B cell (primary cell): ENCODE measurements at regions of chr1 and their contacts with region 1.

Region 1: DNA sequence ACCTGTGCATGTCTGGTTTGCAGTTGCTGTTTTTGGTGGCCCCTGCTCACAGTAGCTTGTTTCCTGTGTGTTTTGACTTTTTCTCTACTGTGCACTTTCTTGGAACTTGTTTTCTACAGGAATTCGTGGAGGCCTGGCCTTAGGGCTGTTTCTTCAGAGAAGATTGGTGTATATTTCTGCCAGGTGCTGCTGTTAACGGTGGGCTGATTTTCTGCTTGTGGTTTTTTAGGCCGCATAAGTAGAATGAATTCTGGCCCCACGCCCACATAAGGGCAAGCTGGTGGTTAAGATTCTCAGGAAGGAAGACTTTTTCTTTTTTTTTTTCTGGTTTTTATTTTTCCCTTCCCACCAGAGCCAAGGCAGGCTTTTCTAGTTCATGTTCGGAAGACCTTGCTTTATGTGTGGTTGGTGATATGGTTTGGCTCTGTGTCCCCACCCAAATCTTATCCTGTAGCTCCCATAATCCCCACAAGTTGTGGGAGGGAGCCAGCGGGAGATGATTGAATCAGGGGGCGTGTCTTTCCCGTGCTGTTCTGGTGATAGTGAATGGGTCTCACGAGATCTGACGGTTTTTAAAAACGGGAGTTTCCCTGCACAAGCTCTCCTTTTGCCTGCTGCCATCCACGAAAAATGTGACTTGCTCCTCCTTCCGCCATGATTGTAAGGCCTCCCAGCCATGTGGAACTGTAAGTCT is 71.5 kb upstream of the DISP3 start:
- DNase-seq: no peak
- ATAC-seq: peak; percentile 39
- H3K4me3 ChIP-seq: no peak overlapping the region
- H3K4me3 Mint-ChIP-seq: peak overlapping the region; percentile 58
- H3K27ac ChIP-seq: peak overlapping the region in 1 of 2 donors; percentile 50
- H3K27ac Mint-ChIP-seq: peak overlapping the region; percentile 84
- H3K4me1 ChIP-seq: peaks cover 11 to 22% of the 10 kb centered on the region in 2 donors
- H3K4me1 Mint-ChIP-seq: peaks cover 21% of the 10 kb centered on the region
- H3K27me3 ChIP-seq: peaks cover 0 to under 1% (median 0%) of the 10 kb centered on the region in 4 experiments
- H3K27me3 Mint-ChIP-seq: peaks cover 8% of the 10 kb centered on the region
- CTCF ChIP-seq: no peak

Region 2: GRCh38 chr1:11373895-11374747 is 33.3 kb before region 1 on chr1:
- CTCF ChIA-PET with region 1: no interaction called
- POLR2A ChIA-PET with region 1: interaction called, 11 read pairs
- intact Hi-C with region 1: no loop called
- DNase-seq: no peak
- ATAC-seq: no peak
- H3K4me3 ChIP-seq: no peak overlapping the region
- H3K4me3 Mint-ChIP-seq: no peak overlapping the region
- H3K27ac ChIP-seq: no peak overlapping the region
- H3K27ac Mint-ChIP-seq: no peak overlapping the region
- H3K4me1 ChIP-seq: peaks cover 6 to 7% of the 10 kb centered on the region in 2 donors
- H3K4me1 Mint-ChIP-seq: peaks cover 21% of the 10 kb centered on the region
- H3K27me3 ChIP-seq: no peaks in the 10 kb centered on the region
- H3K27me3 Mint-ChIP-seq: peaks cover 18% of the 10 kb centered on the region
- CTCF ChIP-seq: no peak